Activated T-helper 2 cell treated with anti-CD3 and anti-CD28 coated beads, Interferon-gamma antibody, Interleukin-2, Interleukin-4, amounts not matched to agents 10 μg/mL and 5 μg/mL and 100 μg/mL, durations not matched to agents 14 hours and 24 hours and 36 hours (primary cell): ENCODE measurements at regions of chr13 and their contacts with region 1.

Region 1: GRCh38 chr13:94667190-94667589 is 45.2 kb downstream of the SOX21 start:
- DNase-seq: no peak
- H3K4me3 Mint-ChIP-seq: peak overlapping the region; percentile 6
- H3K27ac Mint-ChIP-seq: peak overlapping the region; percentile 87
- H3K4me1 Mint-ChIP-seq: peaks cover 48% of the 10 kb centered on the region
- H3K27me3 Mint-ChIP-seq: peaks cover 9% of the 10 kb centered on the region

Region 2: GRCh38 chr13:94569615-94570014 is 97.6 kb before region 1 on chr13:
- intact Hi-C with region 1: no loop called
- DNase-seq: no peak
- H3K4me3 Mint-ChIP-seq: no peak overlapping the region
- H3K27ac Mint-ChIP-seq: no peak overlapping the region
- H3K4me1 Mint-ChIP-seq: no peaks in the 10 kb centered on the region
- H3K27me3 Mint-ChIP-seq: no peaks in the 10 kb centered on the region

Region 3: GRCh38 chr13:94601446-94602431 is 65.5 kb before region 1 on chr13 and contains the start of gene GPR180:
- intact Hi-C with region 1: loop called (anchors 5 kb)
- DNase-seq: peak; percentile 89
- H3K4me3 Mint-ChIP-seq: peak within 1 kb of the TSS; percentile 79
- H3K27ac Mint-ChIP-seq: peak within 1 kb of the TSS; percentile 55
- H3K4me1 Mint-ChIP-seq: peaks cover 24% of the 10 kb centered on the region
- H3K27me3 Mint-ChIP-seq: no peaks in the 10 kb centered on the region
- total RNA-seq, gene GPR180: 9.2 and 9.4 TPM in 2 replicates

Region 4: DNA sequence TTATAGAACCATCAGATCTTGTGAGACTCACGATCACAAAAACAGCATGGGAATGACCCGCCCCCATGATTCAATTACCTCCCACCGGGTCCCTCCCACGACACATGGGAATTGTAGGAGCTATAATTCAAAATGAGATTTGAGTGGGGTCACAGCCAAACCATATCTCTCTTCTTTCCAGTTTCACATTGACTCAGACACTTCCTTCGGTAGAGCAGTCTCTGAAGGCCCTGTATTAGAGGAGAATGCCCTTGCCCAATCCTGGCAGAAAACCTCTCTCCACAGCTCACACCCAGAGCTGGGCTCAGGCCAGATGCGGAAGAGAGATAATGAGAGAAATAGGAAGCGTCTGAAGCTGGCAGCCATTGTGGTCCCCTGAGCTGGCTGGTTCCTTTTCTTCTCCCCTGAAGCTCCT is 812.9 kb after region 1 on chr13:
- intact Hi-C with region 1: loop called (anchors 5 kb)
- DNase-seq: no peak
- H3K4me3 Mint-ChIP-seq: no peak overlapping the region
- H3K27ac Mint-ChIP-seq: no peak overlapping the region
- H3K4me1 Mint-ChIP-seq: peaks cover 17% of the 10 kb centered on the region
- H3K27me3 Mint-ChIP-seq: peaks cover 6% of the 10 kb centered on the region